Mammary epithelial cell (primary cell): ENCODE measurements at regions of chr6 and their contacts with region 1.

Region 1: GRCh38 chr6:14734416-14735340 is 511.2 kb upstream of the JARID2 start:
- DNase-seq: peak; percentile 67
- H3K4me3 ChIP-seq: no peak overlapping the region
- H3K27ac ChIP-seq: peak overlapping the region; percentile 99
- H3K4me1 ChIP-seq: peaks cover 36% of the 10 kb centered on the region
- H3K27me3 ChIP-seq: no peaks in the 10 kb centered on the region
- CTCF ChIP-seq: no peak

Region 2: GRCh38 chr6:14763139-14763538 is 28.5 kb after region 1 on chr6:
- CTCF ChIA-PET with region 1: no interaction called
- dilution Hi-C with region 1: no loop called
- in situ Hi-C with region 1: no loop called
- intact Hi-C with region 1: loop called (anchors 1 kb)
- DNase-seq: peak; percentile 81
- H3K4me3 ChIP-seq: no peak overlapping the region
- H3K27ac ChIP-seq: peak overlapping the region; percentile 59
- H3K4me1 ChIP-seq: peaks cover 26% of the 10 kb centered on the region
- H3K27me3 ChIP-seq: no peaks in the 10 kb centered on the region
- CTCF ChIP-seq: no peak

Region 3: GRCh38 chr6:15062516-15063252 is 328.0 kb after region 1 on chr6:
- CTCF ChIA-PET with region 1: no interaction called
- dilution Hi-C with region 1: no loop called
- in situ Hi-C with region 1: no loop called
- intact Hi-C with region 1: loop called (anchors 10 kb)
- DNase-seq: peak; percentile 100
- H3K4me3 ChIP-seq: no peak overlapping the region
- H3K27ac ChIP-seq: peak overlapping the region; percentile 77
- H3K4me1 ChIP-seq: peaks cover 39% of the 10 kb centered on the region
- H3K27me3 ChIP-seq: no peaks in the 10 kb centered on the region
- CTCF ChIP-seq: no peak